Left ventricle myocardium inferior (tissue), 1 donor: ENCODE measurements at regions of chr6 and their contacts with region 1.

Region 1: DNA sequence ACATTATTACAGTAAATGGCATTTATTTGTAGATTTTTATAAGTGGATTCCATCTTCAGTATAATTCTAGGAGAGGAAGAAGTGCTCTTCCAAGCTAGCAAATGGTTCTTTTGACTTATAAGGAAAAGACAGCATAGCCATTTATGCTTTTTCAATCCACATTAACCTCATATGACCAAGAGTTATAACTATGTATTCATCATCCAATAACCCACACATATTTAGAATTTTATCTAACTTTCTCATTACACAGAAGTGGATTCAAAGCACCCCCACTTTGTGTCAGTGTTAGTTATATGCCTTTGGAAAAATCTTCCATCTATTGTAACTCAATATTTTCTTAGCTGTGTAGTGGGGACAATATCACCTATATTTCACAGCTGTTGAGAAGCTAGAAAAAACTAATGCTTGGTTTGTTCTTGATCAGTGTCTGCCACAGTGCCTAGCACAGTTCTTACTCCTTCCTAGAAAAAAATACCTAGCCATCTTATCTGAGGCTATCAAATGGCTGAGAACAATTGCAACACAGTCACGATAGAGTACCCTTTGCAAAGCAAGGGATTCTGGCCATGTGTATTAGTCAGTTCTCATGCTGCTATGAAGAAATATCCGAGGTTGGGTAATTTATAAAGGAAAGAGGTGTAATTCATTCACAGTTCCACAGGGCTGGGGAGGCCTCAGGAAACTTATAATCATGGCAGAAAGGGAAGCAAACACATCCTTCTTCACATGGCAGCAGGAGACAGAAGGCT is 986.3 kb downstream of the TFAP2A start:
- DNase-seq: no peak
- H3K4me3 ChIP-seq: no peak overlapping the region
- H3K27ac ChIP-seq: no peak overlapping the region
- H3K4me1 ChIP-seq: no peaks in the 10 kb centered on the region
- H3K27me3 ChIP-seq: peaks cover 6% of the 10 kb centered on the region
- CTCF ChIP-seq: no peak

Region 2: GRCh38 chr6:9398071-9398766 is 30.4 kb before region 1 on chr6:
- intact Hi-C with region 1: loop called (anchors 2 kb)
- DNase-seq: peak; percentile 53
- H3K4me3 ChIP-seq: peak overlapping the region; percentile 61
- H3K27ac ChIP-seq: peak overlapping the region; percentile 51
- H3K4me1 ChIP-seq: peaks cover 13% of the 10 kb centered on the region
- H3K27me3 ChIP-seq: peaks cover 19% of the 10 kb centered on the region
- CTCF ChIP-seq: no peak